ENCODE measurements at regions of chr7 and their contacts with region 1.

Region 1: GRCh38 chr7:90455163-90456030 is 14.0 kb upstream of the PTTG1IP2 start:
- ATAC-seq: peak in 7 of 8 experiments; percentile 48 to 91 (median 83)
- H3K4me3 ChIP-seq: no peak overlapping the region
- H3K27ac ChIP-seq: no peak overlapping the region
- H3K4me1 ChIP-seq: peaks cover 0 to 2% of the 10 kb centered on the region in 2 donors

Region 2: DNA sequence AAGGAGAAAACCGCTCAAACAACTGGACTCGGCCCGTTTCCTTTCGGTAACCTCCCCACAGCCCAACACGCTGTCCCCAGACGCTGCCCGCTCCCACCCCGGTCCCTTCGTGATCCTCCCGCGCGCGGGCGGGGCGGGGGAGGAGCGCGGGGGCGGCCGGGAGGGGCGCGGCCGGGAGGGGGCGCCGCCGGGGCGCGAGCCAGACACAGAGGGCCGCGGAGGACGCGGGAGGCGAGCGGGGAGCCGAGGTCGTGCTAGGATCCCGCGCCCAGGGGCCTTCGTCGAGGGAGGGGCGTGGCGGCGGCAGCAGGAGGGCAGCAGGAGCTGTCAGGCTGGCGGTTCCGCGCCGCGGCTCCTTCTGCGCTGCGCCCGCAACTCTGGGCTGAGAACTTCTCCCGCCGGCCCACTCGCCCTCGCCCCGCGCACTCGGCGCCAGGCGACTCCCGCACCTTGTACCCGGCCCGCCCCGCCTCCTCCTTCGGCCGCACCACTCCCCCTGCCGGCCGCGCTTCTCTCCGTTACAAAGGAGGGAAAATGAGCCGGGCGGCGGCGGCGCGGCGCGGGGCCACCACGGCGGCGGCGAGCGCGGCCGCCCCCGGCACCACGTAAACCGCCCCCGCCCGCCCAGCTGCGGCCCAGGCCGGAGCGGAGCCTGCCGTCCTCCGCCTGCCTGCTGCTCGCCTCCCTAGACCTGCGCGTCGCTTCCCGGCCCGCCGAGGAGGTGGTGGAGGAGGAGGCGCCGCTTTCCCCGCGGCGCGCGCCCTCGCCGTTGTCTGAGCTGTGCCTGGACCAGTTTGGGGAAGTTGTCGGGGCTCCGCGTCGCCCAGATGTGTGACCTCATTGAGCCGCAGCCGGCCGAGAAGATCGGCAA is 140.6 kb after region 1 on chr7 and contains the start of gene CDK14:
- in situ Hi-C with region 1: loop called in 2 of 9 experiments (anchors 25 kb)
- ATAC-seq: peak; percentile 80 to 91 (median 87)
- H3K4me3 ChIP-seq: peak within 1 kb of the TSS; percentile 52 to 89 (median 74)
- H3K27ac ChIP-seq: peak within 1 kb of the TSS in 1 of 2 donors; percentile 68
- H3K4me1 ChIP-seq: peaks cover 4 to 14% of the 10 kb centered on the region in 2 donors
- total RNA-seq, gene CDK14: 9.9 to 50.5 (median 13.3) TPM

Region 3: GRCh38 chr7:91128683-91129348 is 673.4 kb after region 1 on chr7:
- in situ Hi-C with region 1: no loop called
- ATAC-seq: peak in 5 of 8 experiments; percentile 24 to 94 (median 83)
- H3K4me3 ChIP-seq: no peak overlapping the region
- H3K27ac ChIP-seq: no peak overlapping the region
- H3K4me1 ChIP-seq: peaks cover 7 to 18% of the 10 kb centered on the region in 2 donors